ENCODE measurements at regions of chr10 and their contacts with region 1.

Region 1: DNA sequence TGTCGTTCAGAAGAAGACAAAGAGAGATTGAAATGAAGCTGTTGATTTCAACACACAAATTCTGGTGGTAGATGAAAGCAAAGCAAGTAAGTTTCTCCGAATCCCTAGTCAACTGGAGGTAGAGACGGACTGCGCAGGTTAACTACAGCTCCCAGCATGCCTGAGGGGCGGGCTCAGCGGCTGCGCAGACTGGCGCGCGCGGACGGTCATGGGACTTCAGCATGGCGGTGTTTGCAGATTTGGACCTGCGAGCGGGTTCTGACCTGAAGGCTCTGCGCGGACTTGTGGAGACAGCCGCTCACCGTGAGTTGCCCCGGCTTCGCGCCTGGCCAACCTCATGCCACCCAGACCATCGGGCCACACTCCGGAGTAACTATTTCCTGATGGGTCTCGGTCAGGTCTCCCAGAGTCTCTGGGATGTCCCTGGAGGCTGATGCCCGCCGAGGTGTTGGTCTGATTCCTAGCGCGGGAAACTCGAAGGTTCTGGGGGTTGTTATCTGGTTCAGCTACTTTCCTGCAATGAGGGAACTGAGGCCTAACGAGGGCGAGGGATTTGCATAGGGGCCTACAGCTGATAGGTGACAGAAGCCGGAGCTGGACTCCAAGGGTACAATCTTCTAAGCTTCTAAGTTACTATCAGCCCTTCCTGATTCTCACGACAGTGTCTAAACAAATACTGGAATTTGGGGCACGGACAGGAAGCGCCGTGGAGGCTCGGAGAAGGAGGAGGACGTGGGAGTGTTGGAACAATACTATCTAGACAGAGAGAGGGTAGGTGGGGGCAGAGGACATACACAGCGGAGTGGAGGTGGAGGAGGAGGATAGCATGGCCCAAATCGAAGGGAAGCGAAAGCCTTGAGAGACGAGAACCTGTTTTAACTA is at the start of gene RPP30:
- ATAC-seq: peak; percentile 97 to 99 (median 98)
- H3K4me3 ChIP-seq: peak within 1 kb of the TSS; percentile 59 to 93 (median 75)
- H3K27ac ChIP-seq: peak within 1 kb of the TSS in 1 of 2 donors; percentile 57
- H3K4me1 ChIP-seq: peaks cover 4 to 7% of the 10 kb centered on the region in 2 donors
- total RNA-seq, gene RPP30: 28.1 to 50.3 (median 33.3) TPM

Region 2: DNA sequence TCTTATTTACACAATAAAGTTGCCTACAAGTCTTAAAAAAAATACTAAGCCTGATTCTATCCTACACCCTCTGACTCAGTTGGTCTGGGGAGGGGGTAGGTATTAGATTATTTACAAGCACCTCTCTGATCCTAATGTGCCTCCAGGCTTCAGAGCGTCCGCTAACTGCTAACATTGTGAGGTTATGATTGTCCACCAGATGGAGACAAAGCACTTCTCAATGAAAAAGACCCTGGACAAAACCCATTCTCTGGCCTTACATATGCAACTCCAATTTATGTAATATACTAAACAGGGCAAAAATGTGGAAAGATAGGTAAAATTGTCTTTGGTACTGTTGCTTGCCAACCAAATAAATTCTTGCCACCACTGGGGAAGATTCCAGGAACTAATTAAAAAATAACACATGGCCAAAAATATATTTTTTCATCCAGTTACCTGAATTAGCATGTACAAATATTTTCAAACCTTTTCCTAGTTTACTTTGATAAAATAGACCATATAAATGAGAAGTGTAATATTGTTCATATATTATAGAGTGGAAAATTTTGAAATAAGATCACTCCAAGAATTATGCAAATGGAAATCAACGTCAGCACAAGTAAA is 1078.3 kb before region 1 on chr10:
- in situ Hi-C with region 1: loop called in 4 of 9 experiments (anchors 10 to 25 kb)
- ATAC-seq: peak; percentile 52 to 90 (median 77)
- H3K4me3 ChIP-seq: no peak overlapping the region
- H3K27ac ChIP-seq: no peak overlapping the region
- H3K4me1 ChIP-seq: no peaks in the 10 kb centered on the region

Region 3: GRCh38 chr10:90741926-90742565 is 130.0 kb before region 1 on chr10:
- in situ Hi-C with region 1: loop called in 1 of 9 experiments (anchors 25 kb)
- ATAC-seq: peak; percentile 25 to 88 (median 49)
- H3K4me3 ChIP-seq: no peak overlapping the region
- H3K27ac ChIP-seq: no peak overlapping the region
- H3K4me1 ChIP-seq: peaks cover 2 to 8% of the 10 kb centered on the region in 2 donors

Region 4: GRCh38 chr10:90751107-90751997 is 120.7 kb before region 1 on chr10:
- in situ Hi-C with region 1: loop called in 2 of 9 experiments (anchors 25 kb)
- ATAC-seq: peak in 4 of 8 experiments; percentile 41 to 89 (median 66)
- H3K4me3 ChIP-seq: no peak overlapping the region
- H3K27ac ChIP-seq: no peak overlapping the region
- H3K4me1 ChIP-seq: no peaks in the 10 kb centered on the region

Region 5: GRCh38 chr10:90798482-90798881 is 73.5 kb before region 1 on chr10:
- in situ Hi-C with region 1: no loop called
- ATAC-seq: no peak
- H3K4me3 ChIP-seq: no peak overlapping the region
- H3K27ac ChIP-seq: no peak overlapping the region
- H3K4me1 ChIP-seq: no peaks in the 10 kb centered on the region

Region 6: DNA sequence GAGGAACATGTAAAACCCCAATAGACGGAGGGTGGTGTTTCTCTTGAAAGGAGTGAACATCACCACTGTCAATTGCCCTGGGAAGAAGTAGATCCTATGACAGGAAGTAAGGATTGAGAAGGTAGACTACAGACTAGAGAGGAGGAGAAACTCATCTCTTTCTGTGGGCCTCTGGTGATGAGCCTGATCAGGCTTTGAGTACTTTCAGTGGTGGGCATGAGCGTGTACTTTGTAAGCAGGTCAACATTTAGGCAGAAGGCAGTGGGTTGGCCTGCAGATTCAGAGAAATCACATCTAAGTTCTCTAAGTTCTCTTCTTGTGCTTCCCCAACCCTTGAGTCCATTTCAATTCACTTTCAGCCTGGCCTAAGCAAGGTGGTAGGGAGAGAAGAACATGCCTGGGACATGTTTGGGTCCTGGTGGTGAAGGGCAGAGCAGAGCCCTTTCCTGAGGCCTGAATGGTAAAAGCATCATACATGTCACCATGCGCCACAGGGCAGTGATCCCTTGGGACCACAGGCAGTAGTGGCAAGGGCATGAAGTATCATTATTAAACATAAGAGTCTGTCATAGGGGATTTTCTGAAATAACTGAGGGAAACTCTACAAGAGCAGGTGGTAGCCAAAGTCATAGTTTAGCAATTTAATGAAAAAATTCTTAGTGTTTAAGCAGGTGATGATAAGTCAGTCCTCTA is 105.3 kb after region 1 on chr10:
- in situ Hi-C with region 1: no loop called
- ATAC-seq: no peak
- H3K4me3 ChIP-seq: no peak overlapping the region
- H3K27ac ChIP-seq: no peak overlapping the region
- H3K4me1 ChIP-seq: no peaks in the 10 kb centered on the region

Measured in motor neuron (in vitro differentiated cells).